Transverse colon (tissue), 4 donors: ENCODE measurements at regions of chr3 and their contacts with region 1.

Region 1: DNA sequence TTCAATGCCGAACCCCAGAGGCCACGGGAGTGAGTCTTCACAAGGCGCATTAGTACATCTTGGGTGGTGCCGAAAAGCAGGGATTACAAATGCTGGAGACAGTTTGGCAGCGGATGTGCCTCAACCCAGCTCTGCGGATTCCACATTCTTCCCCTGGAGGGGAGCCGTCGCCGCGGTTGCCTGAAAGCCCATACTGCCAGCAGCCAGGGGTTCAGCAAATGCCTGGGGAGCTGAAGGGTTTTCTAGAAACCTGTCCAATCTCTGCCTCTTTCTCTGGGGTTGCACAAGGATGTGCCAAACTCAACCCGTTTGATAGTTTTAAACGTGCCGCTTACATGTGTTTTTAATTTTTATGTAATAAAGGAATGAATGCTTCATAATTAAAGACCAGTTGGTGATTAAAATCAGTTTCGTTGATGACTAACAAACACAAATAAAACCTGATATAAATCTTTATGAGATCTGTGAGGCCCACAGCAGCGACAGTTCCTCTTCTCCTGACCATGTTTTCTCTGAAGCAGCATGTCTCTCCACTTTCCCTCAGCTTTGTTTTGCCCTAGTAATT is 74.6 kb upstream of the LEKR1 start:
- DNase-seq: peak; percentile 8
- H3K4me3 ChIP-seq: no peak overlapping the region
- H3K27ac ChIP-seq: no peak overlapping the region
- H3K4me1 ChIP-seq: no peaks in the 10 kb centered on the region
- H3K27me3 ChIP-seq: no peaks in the 10 kb centered on the region
- CTCF ChIP-seq: no peak
- EP300 ChIP-seq: no peak
- POLR2A ChIP-seq: no peak

Region 2: GRCh38 chr3:156492801-156493261 is 258.7 kb before region 1 on chr3:
- in situ Hi-C with region 1: no loop called
- intact Hi-C with region 1: no loop called
- DNase-seq: no peak
- H3K4me3 ChIP-seq: no peak overlapping the region
- H3K27ac ChIP-seq: peak overlapping the region in 3 of 4 donors; percentile 36 to 59 (median 57)
- H3K4me1 ChIP-seq: peaks cover 0 to 3% (median under 1%) of the 10 kb centered on the region in 4 donors
- H3K27me3 ChIP-seq: no peaks in the 10 kb centered on the region
- CTCF ChIP-seq: no peak
- EP300 ChIP-seq: no peak
- POLR2A ChIP-seq: no peak

Region 3: DNA sequence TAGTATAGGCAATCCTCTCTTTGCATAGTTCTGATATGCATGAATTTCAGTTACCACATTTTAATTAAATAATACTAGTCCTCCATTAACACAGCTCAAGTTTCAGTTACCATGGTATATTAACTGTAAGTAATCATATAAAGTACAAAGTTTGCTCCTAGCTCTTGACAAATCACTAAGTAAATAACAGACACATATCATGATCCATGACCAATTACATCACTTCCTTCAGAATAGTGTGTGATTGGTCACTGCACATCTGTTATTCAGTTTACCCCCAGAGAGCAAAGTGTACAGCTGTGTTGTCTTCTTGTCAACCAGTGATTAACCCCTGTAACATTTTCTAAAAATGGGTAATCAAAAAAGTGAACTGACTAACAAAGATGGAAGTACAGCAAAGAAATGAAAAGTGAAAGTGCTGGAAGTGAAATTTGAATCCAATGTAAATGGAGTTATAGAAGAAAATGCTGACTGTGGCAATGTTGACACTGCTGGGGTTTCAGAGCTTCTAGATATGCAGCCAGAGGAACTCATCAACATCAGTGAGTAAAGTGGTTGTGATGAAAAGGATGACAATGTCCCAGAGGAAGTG is 44.4 kb after region 1 on chr3:
- in situ Hi-C with region 1: no loop called
- intact Hi-C with region 1: loop called (anchors 2 kb)
- DNase-seq: no peak
- H3K4me3 ChIP-seq: no peak overlapping the region
- H3K27ac ChIP-seq: no peak overlapping the region
- H3K4me1 ChIP-seq: no peaks in the 10 kb centered on the region
- H3K27me3 ChIP-seq: no peaks in the 10 kb centered on the region
- CTCF ChIP-seq: no peak
- EP300 ChIP-seq: no peak
- POLR2A ChIP-seq: no peak